HepG2 (cell line): ENCODE measurements at regions of chr17 and their contacts with region 1.

Region 1: GRCh38 chr17:64385187-64386083 is 5.2 kb downstream of the PECAM1 start:
- DNase-seq: peak; percentile 96
- ATAC-seq: peak; percentile 81
- H3K4me3 ChIP-seq: peak overlapping the region; percentile 53 to 79 (median 78)
- H3K27ac ChIP-seq: peak overlapping the region; percentile 89
- H3K4me1 ChIP-seq: peaks cover 94% of the 10 kb centered on the region
- H3K27me3 ChIP-seq: no peaks in the 10 kb centered on the region; a peak in 1 of 5 replicates
- CTCF ChIP-seq: peak; percentile 28
- EP300 ChIP-seq: peak; percentile 72 to 95; a peak in 3 of 4 replicates
- POLR2A ChIP-seq: peak; percentile 71 to 72
- RAD21 ChIP-seq: no peak; the same call in 1 of the 2 replicates

Region 2: DNA sequence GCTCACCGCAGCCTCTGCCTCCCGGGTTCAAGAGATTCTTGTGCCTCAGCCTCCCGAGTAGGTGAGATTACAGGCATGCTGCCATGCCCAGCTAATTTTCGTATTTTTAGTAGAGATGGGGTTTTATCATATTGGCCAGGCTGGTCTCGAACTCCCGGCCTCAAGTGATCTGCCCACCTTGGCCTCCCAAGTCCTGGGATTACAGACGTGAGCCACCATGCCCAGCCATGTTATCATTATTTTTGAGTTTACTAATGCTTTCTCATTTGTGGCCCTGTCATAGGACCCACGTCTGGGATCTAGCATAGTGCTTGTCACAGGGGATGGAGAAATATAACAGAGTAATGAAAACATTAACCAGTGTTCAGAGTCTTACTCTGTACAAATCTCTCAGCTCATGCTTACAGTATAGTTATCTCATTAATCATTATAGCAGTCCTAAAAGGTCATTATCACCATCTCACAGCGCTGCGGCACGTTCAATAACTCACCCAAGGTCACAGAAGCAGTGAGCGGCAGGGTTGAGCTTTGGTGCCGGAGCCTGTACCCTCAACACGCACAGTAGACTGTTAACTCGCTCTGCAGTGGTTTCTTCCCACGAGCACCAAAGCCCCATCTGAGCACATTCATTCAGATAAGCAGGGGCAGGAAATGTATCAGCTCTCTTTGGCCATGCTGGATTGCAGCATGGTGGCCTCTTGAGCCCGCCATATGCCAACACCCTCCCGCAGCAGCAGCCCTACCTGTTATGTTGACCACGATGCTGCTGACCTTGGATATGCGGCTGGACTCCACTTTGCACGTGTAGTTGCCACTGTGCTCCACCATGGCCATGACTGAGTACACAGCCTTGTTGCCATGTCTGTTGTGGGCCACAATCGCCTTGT is 16.2 kb before region 1 on chr17:
- CTCF ChIA-PET with region 1: no interaction called
- POLR2A ChIA-PET with region 1: interaction called, 24 read pairs
- in situ Hi-C with region 1: no loop called
- intact Hi-C with region 1: no loop called
- DNase-seq: peak; percentile 76
- ATAC-seq: peak; percentile 96
- H3K4me3 ChIP-seq: peak overlapping the region in 2 of 3 experiments; percentile 29 to 34; a peak in 2 of 6 replicates
- H3K27ac ChIP-seq: peak overlapping the region; percentile 66
- H3K4me1 ChIP-seq: peaks cover 18% of the 10 kb centered on the region
- H3K27me3 ChIP-seq: no peaks in the 10 kb centered on the region
- CTCF ChIP-seq: no peak
- EP300 ChIP-seq: peak in 1 of 2 experiments; percentile 44; a peak in 1 of 4 replicates
- POLR2A ChIP-seq: no peak; a peak in 1 of 4 replicates
- RAD21 ChIP-seq: no peak

Region 3: GRCh38 chr17:64406321-64407200 is 21.1 kb after region 1 on chr17:
- CTCF ChIA-PET with region 1: no interaction called
- POLR2A ChIA-PET with region 1: interaction called, 16 read pairs
- in situ Hi-C with region 1: no loop called
- intact Hi-C with region 1: no loop called
- DNase-seq: peak; percentile 92
- ATAC-seq: peak; percentile 85
- H3K4me3 ChIP-seq: peak overlapping the region in 1 of 3 experiments; percentile 15; a peak in 2 of 6 replicates
- H3K27ac ChIP-seq: peak overlapping the region; percentile 76
- H3K4me1 ChIP-seq: peaks cover 95% of the 10 kb centered on the region
- H3K27me3 ChIP-seq: no peaks in the 10 kb centered on the region
- CTCF ChIP-seq: peak; percentile 32; the same call in 1 of the 2 replicates
- EP300 ChIP-seq: peak; percentile 19 to 78; a peak in 2 of 4 replicates
- POLR2A ChIP-seq: peak in 1 of 2 experiments; percentile 65
- RAD21 ChIP-seq: no peak; the same call in 1 of the 2 replicates